Ovary (tissue), 10 donors: ENCODE measurements at regions of chr6 and their contacts with region 1.

Region 1: DNA sequence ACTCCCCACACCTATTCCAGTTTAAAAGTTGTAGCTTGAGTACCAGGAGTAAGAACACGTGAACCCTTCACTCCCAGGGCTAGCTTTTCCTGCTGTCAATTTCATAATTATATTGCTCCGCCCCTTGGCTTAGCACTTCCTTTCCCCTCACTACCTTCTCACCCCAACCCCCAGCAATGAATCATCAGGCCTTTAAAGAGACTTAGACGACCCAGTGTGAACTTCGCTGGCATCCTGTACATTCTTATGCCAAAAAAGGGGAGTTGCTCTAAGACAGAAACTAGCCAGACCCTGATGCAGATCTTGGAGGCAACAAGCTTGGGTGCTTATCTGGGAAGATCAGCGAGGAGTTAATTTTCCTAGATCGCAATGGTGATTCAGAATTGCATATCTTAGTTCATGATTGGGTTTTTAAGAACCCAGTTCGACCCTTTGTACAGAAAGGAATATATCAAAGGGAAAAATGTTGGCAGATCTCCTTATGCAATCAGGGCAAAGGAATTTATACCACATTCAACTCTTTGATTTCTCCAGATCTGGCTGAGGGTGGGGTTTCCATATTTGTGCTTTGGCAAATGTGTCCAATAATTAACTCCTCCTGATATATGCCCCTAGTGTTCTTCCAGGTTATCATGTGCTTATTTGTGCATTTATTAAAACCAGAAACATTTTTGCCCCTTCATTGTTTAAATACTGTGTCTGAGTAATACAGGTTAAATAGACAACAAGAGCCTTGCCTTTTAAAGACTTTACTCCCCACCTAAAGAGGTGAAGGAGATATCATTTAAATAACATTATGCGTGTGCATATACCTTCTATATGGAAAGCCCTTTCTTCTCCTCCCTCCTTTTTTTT is 8.1 kb upstream of the ATXN1 start:
- DNase-seq: no peak
- H3K4me3 ChIP-seq: no peak overlapping the region
- H3K27ac ChIP-seq: no peak overlapping the region
- H3K4me1 ChIP-seq: peaks cover 2% of the 10 kb centered on the region
- H3K27me3 ChIP-seq: no peaks in the 10 kb centered on the region
- CTCF ChIP-seq: no peak
- EP300 ChIP-seq: no peak
- POLR2A ChIP-seq: no peak

Region 2: GRCh38 chr6:16731478-16732051 is 37.8 kb before region 1 on chr6:
- intact Hi-C with region 1: loop called in 1 of 4 experiments (anchors 2 kb)
- DNase-seq: no peak
- H3K4me3 ChIP-seq: no peak overlapping the region
- H3K27ac ChIP-seq: no peak overlapping the region
- H3K4me1 ChIP-seq: no peaks in the 10 kb centered on the region
- H3K27me3 ChIP-seq: no peaks in the 10 kb centered on the region
- CTCF ChIP-seq: no peak
- EP300 ChIP-seq: no peak
- POLR2A ChIP-seq: no peak

Region 3: GRCh38 chr6:16876201-16876600 is 106.8 kb after region 1 on chr6:
- intact Hi-C with region 1: no loop called
- DNase-seq: no peak
- H3K4me3 ChIP-seq: no peak overlapping the region
- H3K27ac ChIP-seq: no peak overlapping the region
- H3K4me1 ChIP-seq: no peaks in the 10 kb centered on the region
- H3K27me3 ChIP-seq: no peaks in the 10 kb centered on the region
- CTCF ChIP-seq: no peak
- EP300 ChIP-seq: no peak
- POLR2A ChIP-seq: no peak

Region 4: GRCh38 chr6:17542243-17542642 is 772.9 kb after region 1 on chr6:
- intact Hi-C with region 1: no loop called
- DNase-seq: no peak
- H3K4me3 ChIP-seq: no peak overlapping the region
- H3K27ac ChIP-seq: no peak overlapping the region
- H3K4me1 ChIP-seq: no peaks in the 10 kb centered on the region
- H3K27me3 ChIP-seq: no peaks in the 10 kb centered on the region
- CTCF ChIP-seq: no peak
- EP300 ChIP-seq: no peak
- POLR2A ChIP-seq: no peak